GM18951 (cell line): ENCODE measurements at regions of chr11 and their contacts with region 1.

Region 1: DNA sequence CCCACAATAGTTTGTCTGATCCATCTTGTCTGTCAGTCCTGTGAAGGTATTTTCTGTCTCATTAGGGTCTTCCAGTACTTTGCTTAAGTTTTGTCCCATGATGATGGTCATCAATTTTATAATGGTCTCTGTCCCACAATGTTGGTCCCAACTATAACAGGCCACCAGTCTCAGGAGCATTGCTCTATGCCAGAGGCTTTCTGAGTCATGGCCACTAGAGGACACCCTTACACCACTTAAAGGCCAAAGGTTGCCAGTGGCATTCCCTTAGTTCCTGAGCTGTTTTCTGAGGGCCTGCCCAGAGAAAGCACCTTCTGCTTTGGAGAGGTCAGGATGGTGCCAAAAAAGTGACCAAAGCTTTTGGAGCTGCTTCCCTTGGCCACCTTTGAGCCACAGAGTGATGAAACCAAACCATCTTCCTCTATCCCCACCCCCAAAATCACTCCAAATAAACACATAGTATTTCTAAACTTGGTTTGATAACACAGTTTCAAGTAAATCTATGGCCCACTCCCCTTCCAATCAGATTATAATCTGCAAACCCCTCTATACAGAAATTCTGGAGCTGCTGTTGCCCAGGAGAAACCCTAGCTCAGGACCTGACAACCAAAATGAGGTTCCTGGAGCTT is 19.3 kb downstream of the EIF3F start:
- POLR2A ChIP-seq: no peak

Region 2: DNA sequence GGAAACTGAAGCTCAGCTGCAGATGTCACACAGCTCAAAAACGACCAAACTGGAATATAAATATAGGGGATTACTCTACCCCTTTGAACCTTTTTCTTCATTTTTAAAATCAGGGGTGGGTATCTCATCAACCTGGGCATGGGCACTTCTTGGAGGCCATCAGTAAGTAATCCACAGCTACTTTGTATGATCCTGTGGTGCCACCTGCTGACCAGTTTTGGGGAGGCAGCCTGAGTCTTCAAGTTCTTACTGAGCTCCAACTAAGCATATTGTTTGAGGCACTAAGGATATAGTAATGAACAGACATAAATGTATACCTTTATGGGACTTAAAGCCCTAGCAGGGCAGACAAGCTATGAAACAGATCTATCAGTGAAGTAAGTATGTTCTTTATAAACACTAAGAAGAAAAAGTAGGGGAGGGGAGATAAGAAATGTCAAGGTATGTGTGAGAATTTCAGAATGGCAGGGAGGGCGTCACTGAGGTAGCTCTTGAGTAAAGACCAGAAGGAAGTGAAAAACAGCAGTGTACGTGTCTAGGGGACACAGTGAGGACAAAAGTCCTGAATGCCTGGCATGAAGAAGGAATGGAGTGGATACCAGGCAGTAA is 92.9 kb after region 1 on chr11:
- in situ Hi-C with region 1: loop called (anchors 10 kb)
- POLR2A ChIP-seq: no peak

Region 3: DNA sequence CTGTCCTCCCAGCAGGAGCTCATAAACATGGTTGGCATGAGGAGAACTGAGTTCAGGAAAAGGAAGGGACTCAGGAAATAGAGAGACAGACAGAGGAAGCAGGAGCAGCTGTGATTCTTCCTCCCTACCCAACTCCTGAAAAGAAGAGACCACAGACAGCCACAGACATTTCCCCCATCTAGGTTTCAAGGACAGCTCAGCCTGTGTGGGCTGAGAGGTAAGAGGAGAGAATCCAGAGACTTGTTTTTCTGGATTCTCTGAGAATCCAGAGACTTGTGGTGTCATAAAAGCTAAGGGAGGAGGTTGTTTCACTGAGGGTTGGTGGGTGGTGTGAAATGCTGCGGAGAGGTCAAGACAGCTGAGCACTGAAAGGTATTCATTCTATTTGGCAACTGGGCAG is 606.6 kb after region 1 on chr11:
- in situ Hi-C with region 1: no loop called
- POLR2A ChIP-seq: no peak